ENCODE measurements at regions of chr9 and their contacts with region 1.

Region 1: GRCh38 chr9:134488331-134488881 is 153.2 kb upstream of the COL5A1 start:
- DNase-seq: peak in 1 of 2 donors; percentile 75
- H3K4me3 ChIP-seq: no peak overlapping the region
- H3K27ac ChIP-seq: no peak overlapping the region
- H3K4me1 ChIP-seq: no peaks in the 10 kb centered on the region
- H3K27me3 ChIP-seq: no peaks in the 10 kb centered on the region
- CTCF ChIP-seq: no peak

Region 2: DNA sequence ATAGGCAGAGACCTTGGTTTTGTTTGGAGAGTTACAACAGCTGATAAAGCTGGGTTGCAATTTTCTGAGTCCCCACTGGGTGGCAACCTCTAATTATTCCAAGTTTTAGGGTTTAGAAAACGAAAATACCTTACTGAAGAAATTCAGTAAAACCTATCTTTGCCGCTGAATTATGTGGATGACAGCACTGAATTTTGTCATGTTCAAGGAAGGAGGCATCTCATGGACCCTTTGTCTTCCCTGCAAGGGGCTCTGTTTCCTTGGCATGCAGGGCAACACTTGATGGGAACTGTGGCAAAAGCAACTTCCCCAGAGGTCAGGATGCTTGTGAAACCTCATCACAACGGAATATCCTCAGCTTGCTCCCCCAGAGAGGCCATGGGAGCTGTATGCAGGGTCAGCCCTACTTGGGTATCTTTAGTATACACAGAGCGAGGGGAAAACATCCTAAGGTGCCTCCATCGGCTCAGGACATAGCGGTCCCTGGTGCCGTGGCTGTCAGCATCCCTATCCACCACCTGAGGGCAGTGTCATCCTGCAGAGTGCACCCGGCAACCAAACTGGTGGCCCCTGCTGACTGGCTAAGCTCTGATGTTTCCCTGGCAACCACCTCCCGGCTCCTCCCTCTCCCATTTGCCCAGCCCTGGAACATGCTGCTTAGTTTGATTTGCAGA is 39.0 kb before region 1 on chr9:
- intact Hi-C with region 1: loop called (anchors 5 kb)
- DNase-seq: peak; percentile 67 to 95
- H3K4me3 ChIP-seq: no peak overlapping the region
- H3K27ac ChIP-seq: no peak overlapping the region
- H3K4me1 ChIP-seq: no peaks in the 10 kb centered on the region
- H3K27me3 ChIP-seq: no peaks in the 10 kb centered on the region
- CTCF ChIP-seq: peak; percentile 86 to 94 (median 86)